Heart right ventricle (tissue), 16 donors: ENCODE measurements at regions of chr13 and their contacts with region 1.

Region 1: GRCh38 chr13:31733066-31733465 is 6.3 kb upstream of the RXFP2 start:
- DNase-seq: no peak
- ATAC-seq: no peak
- H3K4me3 ChIP-seq: peak overlapping the region in 1 of 10 donors; percentile 19
- H3K27ac ChIP-seq: no peak overlapping the region
- H3K4me1 ChIP-seq: peaks cover 0 to 7% (median 0%) of the 10 kb centered on the region in 9 donors
- H3K27me3 ChIP-seq: peaks cover 0 to 4% (median 0%) of the 10 kb centered on the region in 7 donors
- CTCF ChIP-seq: no peak

Region 2: DNA sequence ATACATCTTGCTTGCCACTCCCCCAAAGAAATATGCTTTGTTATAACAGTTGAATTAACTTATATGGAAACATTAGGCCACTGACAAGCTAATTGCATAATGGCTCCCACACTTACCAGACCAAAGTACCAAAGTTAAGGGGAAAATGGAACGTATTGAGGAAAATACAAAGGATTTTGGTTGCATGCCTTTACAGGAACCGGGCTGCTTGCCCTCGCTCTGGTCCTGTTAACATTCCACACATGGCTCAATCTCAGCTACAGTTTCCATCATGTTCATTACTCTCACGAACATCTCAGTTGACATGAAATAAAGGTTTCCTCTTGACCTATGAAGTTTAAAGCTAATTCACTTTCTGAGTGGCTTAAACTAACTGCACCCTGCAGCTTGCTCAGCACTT is 214.4 kb before region 1 on chr13:
- intact Hi-C with region 1: loop called in 1 of 10 experiments (anchors 10 kb)
- DNase-seq: no peak
- ATAC-seq: no peak
- H3K4me3 ChIP-seq: no peak overlapping the region
- H3K27ac ChIP-seq: no peak overlapping the region
- H3K4me1 ChIP-seq: peaks cover 0 to 6% (median 0%) of the 10 kb centered on the region in 9 donors
- H3K27me3 ChIP-seq: peaks cover 0 to 5% (median 0%) of the 10 kb centered on the region in 7 donors
- CTCF ChIP-seq: no peak

Region 3: DNA sequence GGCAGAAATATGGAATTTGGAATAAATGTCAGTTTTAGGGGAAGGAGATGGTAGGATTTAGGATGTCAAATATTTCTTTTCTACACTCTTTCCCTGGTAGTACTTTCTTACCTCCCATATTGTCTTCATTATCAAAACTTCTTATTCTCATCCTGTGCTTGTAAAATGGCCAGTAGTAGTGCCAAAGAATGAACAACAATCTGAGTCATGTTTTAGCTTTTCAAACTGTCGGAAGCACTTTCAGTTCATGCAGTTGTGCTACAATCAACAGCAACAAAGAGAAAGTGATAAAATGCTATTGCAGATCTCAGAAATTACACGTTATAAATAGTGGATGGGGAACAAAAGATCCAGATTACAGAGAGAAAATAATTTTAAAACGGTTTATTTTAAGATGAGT is 187.4 kb before region 1 on chr13:
- intact Hi-C with region 1: loop called in 1 of 10 experiments (anchors 10 kb)
- DNase-seq: no peak
- ATAC-seq: no peak
- H3K4me3 ChIP-seq: no peak overlapping the region
- H3K27ac ChIP-seq: no peak overlapping the region
- H3K4me1 ChIP-seq: peaks cover 0 to 11% (median 0%) of the 10 kb centered on the region in 9 donors
- H3K27me3 ChIP-seq: no peaks in the 10 kb centered on the region
- CTCF ChIP-seq: no peak

Region 4: DNA sequence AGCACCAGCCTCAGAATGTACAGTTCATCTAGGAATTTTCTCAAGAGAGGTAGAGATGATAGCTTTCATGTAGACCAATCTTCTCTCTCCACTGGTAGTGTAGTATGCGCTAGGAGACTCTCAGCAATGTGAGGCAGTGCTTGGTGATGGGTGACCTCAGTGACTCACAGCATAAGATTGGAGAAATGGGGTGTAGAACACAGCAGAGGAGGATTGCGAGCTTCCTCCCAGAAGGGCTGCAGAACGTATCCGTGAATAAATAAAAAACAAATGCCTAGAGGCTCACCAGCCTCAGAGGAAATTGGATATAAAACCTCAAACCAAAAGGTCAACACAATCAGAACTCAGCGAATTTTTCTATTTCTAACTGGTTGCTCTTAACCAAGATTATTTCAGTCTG is 176.7 kb before region 1 on chr13:
- intact Hi-C with region 1: no loop called
- DNase-seq: no peak
- ATAC-seq: no peak
- H3K4me3 ChIP-seq: no peak overlapping the region
- H3K27ac ChIP-seq: no peak overlapping the region
- H3K4me1 ChIP-seq: no peaks in the 10 kb centered on the region
- H3K27me3 ChIP-seq: no peaks in the 10 kb centered on the region
- CTCF ChIP-seq: no peak

Region 5: DNA sequence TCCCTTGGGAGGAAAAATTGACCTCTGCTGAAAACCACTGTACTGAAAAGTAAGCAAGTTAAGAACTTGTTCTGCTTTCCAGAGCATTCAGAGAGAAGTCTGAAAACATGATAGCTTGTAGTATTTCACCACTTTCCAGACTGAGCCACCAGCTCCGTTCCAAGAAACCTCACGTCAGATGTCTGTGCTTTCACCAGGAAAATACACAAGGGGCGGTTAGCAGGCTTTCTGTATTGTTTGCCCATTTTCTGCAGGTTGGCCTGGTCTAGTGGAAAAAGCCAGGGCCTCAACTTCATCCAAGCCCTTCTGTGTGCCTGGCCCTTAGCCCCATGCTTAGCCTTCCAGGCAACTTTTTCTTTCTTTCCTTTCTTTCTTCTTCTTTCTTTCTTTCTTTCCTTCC is 42.6 kb after region 1 on chr13:
- intact Hi-C with region 1: no loop called
- DNase-seq: peak; percentile 17 to 50
- ATAC-seq: peak; percentile 80 to 95 (median 88)
- H3K4me3 ChIP-seq: no peak overlapping the region
- H3K27ac ChIP-seq: peak overlapping the region in 2 of 10 donors; percentile 9 to 54
- H3K4me1 ChIP-seq: peaks cover 0 to 25% (median 0%) of the 10 kb centered on the region in 9 donors
- H3K27me3 ChIP-seq: peaks cover 0 to 7% (median 0%) of the 10 kb centered on the region in 7 donors
- CTCF ChIP-seq: no peak